Naive thymus-derived CD4-positive, alpha-beta T cell (primary cell): ENCODE measurements at regions of chr12 and their contacts with region 1.

Region 1: DNA sequence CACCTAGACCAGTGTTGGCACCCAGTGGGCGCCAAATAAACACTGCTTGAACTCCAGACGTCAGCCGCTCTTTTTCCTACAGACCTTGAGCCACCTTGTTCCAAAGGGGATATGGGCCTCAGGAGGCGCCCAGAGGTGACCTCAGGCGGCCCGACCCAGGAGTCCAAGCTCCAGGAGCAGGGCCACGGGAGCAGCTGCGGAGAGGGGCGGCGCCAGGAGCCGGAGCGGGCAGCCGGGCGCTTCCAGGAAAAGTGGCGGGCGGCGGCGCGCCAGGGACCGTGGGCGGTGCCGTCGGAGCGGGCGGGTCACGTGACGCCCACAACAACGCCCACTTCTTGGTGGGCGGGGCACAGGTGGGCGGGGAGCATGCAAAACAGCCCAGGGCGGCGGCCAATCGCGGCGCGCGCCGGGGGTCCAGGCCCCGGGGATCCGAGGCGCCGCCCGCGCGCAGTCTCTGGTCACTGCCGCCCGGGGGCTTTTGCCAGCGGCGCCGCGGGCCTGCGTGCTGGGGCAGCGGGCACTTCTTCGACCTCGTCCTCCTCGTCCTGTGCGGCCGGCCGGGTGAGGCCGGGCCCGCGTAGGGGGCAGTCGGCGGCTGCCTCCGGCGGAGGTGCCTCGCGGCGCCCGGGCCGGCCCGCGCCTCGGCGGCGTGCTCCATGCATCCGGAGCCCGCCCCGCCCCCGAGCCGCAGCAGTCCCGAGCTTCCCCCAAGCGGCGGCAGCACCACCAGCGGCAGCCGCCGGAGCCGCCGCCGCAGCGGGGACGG is at the start of gene ORAI1:
- DNase-seq: peak; percentile 93 to 99 (median 97)
- ATAC-seq: peak; percentile 88
- H3K4me3 ChIP-seq: peak within 1 kb of the TSS; percentile 77
- H3K4me3 Mint-ChIP-seq: peak within 1 kb of the TSS; percentile 78 to 99 (median 94)
- H3K27ac ChIP-seq: peak within 1 kb of the TSS; percentile 97
- H3K27ac Mint-ChIP-seq: peak within 1 kb of the TSS; percentile 91 to 98 (median 95)
- H3K4me1 ChIP-seq: peaks cover 29 to 36% of the 10 kb centered on the region in 2 donors
- H3K4me1 Mint-ChIP-seq: peaks cover 32 to 49% (median 44%) of the 10 kb centered on the region in 7 donors
- H3K27me3 ChIP-seq: no peaks in the 10 kb centered on the region
- H3K27me3 Mint-ChIP-seq: no peaks in the 10 kb centered on the region
- total RNA-seq, gene ORAI1: 34.4 to 73.5 (median 50.6) TPM

Region 2: DNA sequence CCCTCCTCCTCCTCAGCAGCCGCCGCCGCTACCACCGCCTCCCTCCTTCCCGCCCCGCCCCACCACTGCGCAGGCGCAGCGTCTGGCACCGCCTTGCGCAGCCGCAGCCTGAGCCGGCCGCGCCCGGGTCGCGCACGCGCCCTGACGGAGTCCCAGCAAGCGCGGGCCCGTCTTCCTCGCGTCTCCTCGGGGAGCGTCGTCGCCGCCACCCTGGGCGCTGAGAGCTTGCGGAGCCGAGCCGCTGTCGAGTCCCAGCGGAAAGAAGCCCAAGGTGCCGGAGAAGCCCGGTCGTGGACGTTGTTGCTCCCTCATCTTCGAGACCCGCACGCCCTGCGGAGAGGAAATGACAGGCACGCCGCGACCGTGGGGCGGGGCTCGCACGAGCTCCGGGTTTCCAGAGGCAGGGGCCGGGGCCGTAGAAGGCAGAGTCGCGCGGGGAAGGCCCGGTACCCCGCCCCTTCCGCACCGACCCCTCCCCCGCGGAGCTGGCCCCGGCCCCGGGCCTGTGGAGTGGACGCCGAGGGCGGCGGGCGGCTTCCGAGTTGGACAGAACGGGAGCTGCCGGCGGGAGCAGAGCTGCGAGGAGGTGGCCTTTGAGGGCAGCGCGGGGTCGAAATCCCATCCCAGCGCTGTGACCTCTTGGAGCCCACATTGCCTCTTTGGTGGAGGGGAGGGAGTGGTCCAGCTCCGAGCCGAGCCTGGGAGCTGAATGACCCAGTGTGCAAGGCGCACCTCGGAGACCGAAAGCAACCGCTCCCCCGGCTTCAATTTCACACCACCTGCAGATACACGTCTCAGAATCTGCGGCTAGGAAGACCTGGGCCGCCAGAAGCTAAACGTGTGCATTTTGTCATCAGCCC is 1509.2 kb before region 1 on chr12:
- CTCF ChIA-PET with region 1: no interaction called
- POLR2A ChIA-PET with region 1: no interaction called
- intact Hi-C with region 1: no loop called
- DNase-seq: peak; percentile 95 to 100 (median 98)
- ATAC-seq: peak; percentile 91
- H3K4me3 ChIP-seq: peak overlapping the region; percentile 82
- H3K4me3 Mint-ChIP-seq: peak overlapping the region; percentile 78 to 95 (median 90)
- H3K27ac ChIP-seq: peak overlapping the region; percentile 84
- H3K27ac Mint-ChIP-seq: peak overlapping the region; percentile 80 to 97 (median 90)
- H3K4me1 ChIP-seq: peaks cover 46 to 48% of the 10 kb centered on the region in 2 donors
- H3K4me1 Mint-ChIP-seq: peaks cover 64 to 86% (median 80%) of the 10 kb centered on the region in 7 donors
- H3K27me3 ChIP-seq: no peaks in the 10 kb centered on the region
- H3K27me3 Mint-ChIP-seq: no peaks in the 10 kb centered on the region

Region 3: DNA sequence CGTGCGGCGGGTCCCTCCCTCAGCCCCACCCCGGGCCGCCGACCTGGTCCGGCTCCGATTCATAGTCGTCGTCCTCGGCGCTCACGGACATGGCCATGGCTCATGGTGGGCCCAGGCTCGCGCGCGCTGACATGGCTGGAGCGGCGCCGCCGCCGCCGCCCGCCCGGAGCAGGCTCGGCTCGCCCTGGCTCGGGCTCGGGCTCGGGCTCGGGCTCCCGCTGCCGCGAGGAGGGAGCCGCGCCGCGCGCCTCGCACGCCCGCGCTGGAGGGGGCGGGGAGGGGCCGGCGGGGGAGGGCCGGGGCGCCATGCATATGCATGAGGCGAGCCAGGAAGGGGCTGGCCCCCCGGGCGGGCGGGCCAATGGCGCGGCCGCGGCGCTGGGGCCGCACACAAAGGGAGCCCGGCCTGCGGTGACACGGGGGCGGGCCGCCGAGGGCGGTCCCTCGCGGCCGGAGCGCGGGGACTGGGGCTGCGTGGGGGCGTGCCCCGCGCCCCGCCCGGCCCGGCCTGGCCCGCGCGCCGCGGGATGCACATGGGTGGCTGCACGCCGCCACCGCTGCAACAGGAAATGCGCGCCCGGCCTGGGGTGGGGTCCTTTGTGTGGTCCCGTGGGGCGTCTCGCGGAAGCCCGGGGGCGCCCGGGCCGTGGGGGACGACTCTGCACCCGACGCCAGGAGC is 159.0 kb before region 1 on chr12:
- CTCF ChIA-PET with region 1: no interaction called
- POLR2A ChIA-PET with region 1: no interaction called
- intact Hi-C with region 1: loop called in 1 of 2 experiments (anchors 1 kb)
- DNase-seq: peak; percentile 79 to 93 (median 86)
- ATAC-seq: peak; percentile 92
- H3K4me3 ChIP-seq: peak overlapping the region; percentile 44
- H3K4me3 Mint-ChIP-seq: peak overlapping the region in 6 of 10 donors; percentile 45 to 90 (median 59)
- H3K27ac ChIP-seq: peak overlapping the region; percentile 73
- H3K27ac Mint-ChIP-seq: no peak overlapping the region
- H3K4me1 ChIP-seq: peaks cover 7 to 17% of the 10 kb centered on the region in 2 donors
- H3K4me1 Mint-ChIP-seq: peaks cover 18 to 34% (median 30%) of the 10 kb centered on the region in 7 donors
- H3K27me3 ChIP-seq: no peaks in the 10 kb centered on the region
- H3K27me3 Mint-ChIP-seq: peaks cover 0 to 3% (median 0%) of the 10 kb centered on the region in 5 donors

Region 4: GRCh38 chr12:121550974-121551634 is 75.2 kb before region 1 on chr12:
- CTCF ChIA-PET with region 1: interaction called, 69 read pairs
- POLR2A ChIA-PET with region 1: interaction called, 15 read pairs
- intact Hi-C with region 1: loop called (anchors 1 kb)
- DNase-seq: no peak
- ATAC-seq: no peak
- H3K4me3 ChIP-seq: no peak overlapping the region
- H3K4me3 Mint-ChIP-seq: no peak overlapping the region
- H3K27ac ChIP-seq: no peak overlapping the region
- H3K27ac Mint-ChIP-seq: no peak overlapping the region
- H3K4me1 ChIP-seq: peaks cover 0 to 12% of the 10 kb centered on the region in 2 donors
- H3K4me1 Mint-ChIP-seq: peaks cover 0 to 7% (median 3%) of the 10 kb centered on the region in 7 donors
- H3K27me3 ChIP-seq: no peaks in the 10 kb centered on the region
- H3K27me3 Mint-ChIP-seq: no peaks in the 10 kb centered on the region

Region 5: DNA sequence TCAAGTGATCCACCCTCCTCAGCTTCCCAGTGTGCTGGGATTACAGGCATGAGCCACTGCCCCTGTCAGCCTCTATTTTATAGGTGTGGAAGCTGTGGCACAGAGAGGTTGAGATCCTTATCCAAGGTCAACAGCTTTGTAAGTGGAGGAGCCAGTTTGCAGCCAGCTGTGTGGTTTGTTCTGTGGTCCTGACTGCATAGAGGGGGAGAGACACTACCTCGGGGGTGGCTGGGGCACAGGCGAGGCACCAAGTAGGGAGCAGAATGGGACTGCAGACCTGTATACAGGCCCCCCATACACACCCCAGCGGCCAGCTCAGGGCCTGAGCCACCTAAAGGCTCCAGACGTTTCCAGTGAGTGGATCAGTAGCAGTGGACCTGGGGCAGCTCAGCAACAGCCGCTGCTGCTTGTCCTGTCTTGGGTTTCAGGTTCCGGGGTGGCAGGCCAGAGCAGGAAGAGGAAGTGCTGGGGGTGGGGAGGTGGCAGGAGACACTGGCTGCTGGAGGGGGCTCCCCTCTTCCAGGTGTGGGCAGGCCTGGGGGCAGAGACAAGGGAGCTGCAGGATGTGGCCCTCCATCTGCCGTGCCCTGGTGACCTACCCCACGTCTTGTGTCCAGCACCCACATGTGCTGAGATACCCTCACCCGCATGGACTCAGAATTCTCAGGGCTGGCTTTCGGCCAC is 11.1 kb after region 1 on chr12:
- CTCF ChIA-PET with region 1: interaction called, 23 read pairs
- POLR2A ChIA-PET with region 1: interaction called, 74 read pairs
- intact Hi-C with region 1: loop called (anchors 1 kb)
- DNase-seq: peak in 8 of 9 donors; percentile 38 to 53 (median 46)
- ATAC-seq: peak; percentile 79
- H3K4me3 ChIP-seq: peak overlapping the region; percentile 1
- H3K4me3 Mint-ChIP-seq: peak overlapping the region; percentile 61 to 82 (median 76)
- H3K27ac ChIP-seq: peak overlapping the region; percentile 83
- H3K27ac Mint-ChIP-seq: peak overlapping the region; percentile 82 to 95 (median 92)
- H3K4me1 ChIP-seq: peaks cover 35 to 50% of the 10 kb centered on the region in 2 donors
- H3K4me1 Mint-ChIP-seq: peaks cover 48 to 75% (median 61%) of the 10 kb centered on the region in 7 donors
- H3K27me3 ChIP-seq: no peaks in the 10 kb centered on the region
- H3K27me3 Mint-ChIP-seq: no peaks in the 10 kb centered on the region

Region 6: DNA sequence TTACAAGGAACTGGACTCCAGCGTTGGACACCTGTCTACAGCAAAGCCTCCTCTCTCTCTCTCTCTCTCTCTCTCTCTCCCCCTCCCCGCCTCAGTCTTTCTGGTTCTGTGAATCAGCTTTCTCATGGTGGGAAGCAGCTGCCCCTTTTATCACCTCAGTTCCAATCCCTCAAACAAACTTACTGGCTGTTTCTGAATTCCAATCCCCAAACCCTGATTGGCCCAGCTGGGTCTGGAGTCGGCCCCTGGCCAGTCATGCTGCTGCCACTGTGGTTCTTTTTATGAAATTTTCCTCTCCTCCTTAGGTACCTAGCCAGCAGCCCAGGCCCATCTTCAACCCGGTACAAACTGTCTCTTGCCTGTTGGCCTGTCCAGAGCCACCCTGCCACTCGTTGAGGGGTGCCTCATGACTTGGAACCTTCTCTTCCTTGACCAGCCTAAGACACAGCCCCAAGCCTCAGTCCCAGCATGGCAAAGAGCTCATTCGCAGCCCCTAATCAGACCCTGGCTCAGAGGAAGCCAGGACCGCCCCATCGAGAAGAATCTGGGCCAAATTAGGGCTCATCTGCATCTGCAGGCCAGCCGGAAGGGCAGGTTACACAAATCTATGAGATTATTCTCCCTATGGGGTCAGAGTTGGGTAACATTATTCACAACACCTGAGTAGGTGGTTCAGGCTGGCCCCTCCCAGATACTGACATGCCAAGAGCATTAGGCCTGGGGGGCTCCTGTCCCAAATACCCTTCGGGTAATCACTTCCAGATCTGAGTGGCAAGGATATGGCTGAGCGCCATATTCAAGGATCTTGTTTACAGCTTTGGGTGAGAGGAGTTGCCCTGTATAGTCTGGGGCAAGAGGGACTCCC is 52.7 kb after region 1 on chr12:
- CTCF ChIA-PET with region 1: interaction called, 27 read pairs
- POLR2A ChIA-PET with region 1: interaction called, 14 read pairs
- intact Hi-C with region 1: loop called (anchors 1 kb)
- DNase-seq: no peak
- ATAC-seq: no peak
- H3K4me3 ChIP-seq: no peak overlapping the region
- H3K4me3 Mint-ChIP-seq: no peak overlapping the region
- H3K27ac ChIP-seq: no peak overlapping the region
- H3K27ac Mint-ChIP-seq: peak overlapping the region in 3 of 9 donors; percentile 34 to 59 (median 57)
- H3K4me1 ChIP-seq: no peaks in the 10 kb centered on the region
- H3K4me1 Mint-ChIP-seq: peaks cover 4 to 14% (median 6%) of the 10 kb centered on the region in 7 donors
- H3K27me3 ChIP-seq: no peaks in the 10 kb centered on the region
- H3K27me3 Mint-ChIP-seq: no peaks in the 10 kb centered on the region

Region 7: GRCh38 chr12:121802846-121803630 is 176.8 kb after region 1 on chr12:
- CTCF ChIA-PET with region 1: no interaction called
- POLR2A ChIA-PET with region 1: interaction called, 27 read pairs
- intact Hi-C with region 1: no loop called
- DNase-seq: peak; percentile 84 to 94 (median 92)
- ATAC-seq: peak; percentile 65
- H3K4me3 ChIP-seq: peak overlapping the region; percentile 94
- H3K4me3 Mint-ChIP-seq: peak overlapping the region; percentile 89 to 99 (median 96)
- H3K27ac ChIP-seq: peak overlapping the region; percentile 96
- H3K27ac Mint-ChIP-seq: peak overlapping the region; percentile 98 to 100 (median 99)
- H3K4me1 ChIP-seq: peaks cover 21 to 28% of the 10 kb centered on the region in 2 donors
- H3K4me1 Mint-ChIP-seq: peaks cover 25 to 37% (median 29%) of the 10 kb centered on the region in 7 donors
- H3K27me3 ChIP-seq: no peaks in the 10 kb centered on the region
- H3K27me3 Mint-ChIP-seq: no peaks in the 10 kb centered on the region